Adrenal gland (tissue), 19 donors: ENCODE measurements at regions of chr19 and their contacts with region 1.

Region 1: GRCh38 chr19:51097166-51097738 is 11.0 kb downstream of the CTU1 start:
- DNase-seq: peak; percentile 56 to 78 (median 66)
- H3K4me3 ChIP-seq: no peak overlapping the region
- H3K27ac ChIP-seq: no peak overlapping the region
- H3K4me1 ChIP-seq: peaks cover 0 to 10% of the 10 kb centered on the region in 2 donors
- H3K27me3 ChIP-seq: no peaks in the 10 kb centered on the region
- CTCF ChIP-seq: peak; percentile 41 to 65 (median 54)
- POLR2A ChIP-seq: no peak

Region 2: DNA sequence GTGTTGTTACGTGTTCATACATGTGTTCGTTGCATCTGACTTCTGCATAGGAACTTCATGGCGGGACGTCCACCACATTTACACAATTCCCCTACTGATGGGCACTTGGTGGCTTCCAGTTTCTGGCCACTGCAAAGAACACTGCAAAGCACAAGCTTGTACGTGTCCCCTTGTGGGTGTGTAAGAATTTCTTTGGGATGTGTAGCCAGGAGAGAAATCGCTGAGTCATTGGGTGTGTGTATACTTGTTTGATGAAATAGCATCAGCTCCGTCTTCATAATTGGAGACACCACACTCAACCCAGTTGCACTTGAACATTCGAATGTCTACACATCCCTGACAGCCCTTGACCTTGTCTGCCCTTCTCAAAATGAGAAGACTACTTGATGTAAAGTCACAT is 163.6 kb before region 1 on chr19:
- intact Hi-C with region 1: loop called (anchors 10 kb)
- DNase-seq: no peak
- H3K4me3 ChIP-seq: no peak overlapping the region
- H3K27ac ChIP-seq: no peak overlapping the region
- H3K4me1 ChIP-seq: no peaks in the 10 kb centered on the region
- H3K27me3 ChIP-seq: peaks cover 1% of the 10 kb centered on the region
- CTCF ChIP-seq: no peak
- POLR2A ChIP-seq: no peak

Region 3: DNA sequence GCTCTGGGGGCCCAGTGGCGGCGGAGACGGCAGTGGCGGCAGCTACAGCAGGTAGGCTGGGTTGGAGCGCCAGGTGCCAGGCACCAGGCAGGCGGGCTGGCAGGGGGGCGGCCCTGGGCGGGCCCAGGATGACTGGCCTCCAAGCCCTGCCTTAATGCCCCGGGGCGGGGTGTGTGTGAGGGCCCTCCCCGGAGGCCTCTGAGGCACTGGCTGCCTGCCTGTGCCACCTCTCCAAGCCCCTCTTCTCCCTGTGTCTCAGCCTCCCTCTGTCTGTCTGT is 70.8 kb before region 1 on chr19 and contains the start of gene KLK11:
- intact Hi-C with region 1: no loop called
- DNase-seq: no peak
- H3K4me3 ChIP-seq: no peak within 1 kb of the TSS
- H3K27ac ChIP-seq: no peak within 1 kb of the TSS
- H3K4me1 ChIP-seq: no peaks in the 10 kb centered on the region
- H3K27me3 ChIP-seq: peaks cover 12% of the 10 kb centered on the region
- CTCF ChIP-seq: no peak
- POLR2A ChIP-seq: no peak
- total RNA-seq, gene KLK11: not detected